ENCODE measurements at regions of chr15 and their contacts with region 1.

Region 1: GRCh38 chr15:64010719-64011118 is 35.6 kb downstream of the DAPK2 start:
- DNase-seq: peak; percentile 96
- ATAC-seq: peak; percentile 98
- H3K4me3 ChIP-seq: no peak overlapping the region
- H3K27ac ChIP-seq: peak overlapping the region; percentile 76
- H3K4me1 ChIP-seq: peaks cover 32% of the 10 kb centered on the region
- H3K27me3 ChIP-seq: no peaks in the 10 kb centered on the region
- CTCF ChIP-seq: peak; percentile 36 to 71 (median 54)
- EP300 ChIP-seq: peak; percentile 61 to 78; a peak in 2 of 4 replicates
- POLR2A ChIP-seq: no peak
- RAD21 ChIP-seq: peak; percentile 77

Region 2: DNA sequence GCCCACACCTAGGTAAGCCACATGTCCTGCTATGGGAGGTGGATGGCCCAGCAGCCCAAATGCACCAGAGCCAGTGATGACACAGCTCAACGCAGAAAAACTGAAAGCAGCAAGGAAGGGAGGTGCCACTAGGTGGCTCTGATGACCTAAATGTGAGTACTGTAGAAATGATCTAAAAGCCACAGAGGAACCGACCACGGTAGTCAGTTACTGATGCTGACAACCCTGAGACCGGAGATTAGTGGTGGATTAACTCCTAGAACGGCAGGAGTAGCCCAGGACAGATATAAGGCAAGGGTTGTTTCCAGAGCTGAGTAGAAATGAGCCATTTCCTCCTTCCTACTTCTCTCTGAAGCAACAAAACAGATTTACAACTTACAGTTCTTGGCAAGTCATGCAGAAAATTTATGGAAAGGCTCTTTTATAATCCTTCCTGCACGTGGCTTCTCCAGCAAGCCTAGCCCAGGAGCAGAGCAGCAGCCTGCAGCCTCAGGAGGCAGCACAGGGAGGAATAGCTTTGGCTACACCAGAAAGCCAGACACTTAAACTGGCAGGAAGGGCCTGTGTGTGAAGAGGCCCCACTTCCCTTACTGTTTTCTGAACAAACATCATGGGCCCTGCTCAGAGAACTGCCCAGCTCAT is 400.4 kb before region 1 on chr15:
- CTCF ChIA-PET with region 1: interaction called, 7 read pairs
- POLR2A ChIA-PET with region 1: no interaction called
- RAD21 ChIA-PET with region 1: interaction called, 3 read pairs
- SMC1A ChIA-PET with region 1: interaction called, 18 read pairs
- in situ Hi-C with region 1: no loop called
- intact Hi-C with region 1: no loop called
- DNase-seq: peak; percentile 61
- ATAC-seq: peak; percentile 97
- H3K4me3 ChIP-seq: no peak overlapping the region
- H3K27ac ChIP-seq: peak overlapping the region; percentile 78
- H3K4me1 ChIP-seq: peaks cover 16% of the 10 kb centered on the region
- H3K27me3 ChIP-seq: no peaks in the 10 kb centered on the region
- CTCF ChIP-seq: peak; percentile 80 to 93 (median 89)
- EP300 ChIP-seq: no peak
- POLR2A ChIP-seq: no peak
- RAD21 ChIP-seq: peak; percentile 92

Region 3: DNA sequence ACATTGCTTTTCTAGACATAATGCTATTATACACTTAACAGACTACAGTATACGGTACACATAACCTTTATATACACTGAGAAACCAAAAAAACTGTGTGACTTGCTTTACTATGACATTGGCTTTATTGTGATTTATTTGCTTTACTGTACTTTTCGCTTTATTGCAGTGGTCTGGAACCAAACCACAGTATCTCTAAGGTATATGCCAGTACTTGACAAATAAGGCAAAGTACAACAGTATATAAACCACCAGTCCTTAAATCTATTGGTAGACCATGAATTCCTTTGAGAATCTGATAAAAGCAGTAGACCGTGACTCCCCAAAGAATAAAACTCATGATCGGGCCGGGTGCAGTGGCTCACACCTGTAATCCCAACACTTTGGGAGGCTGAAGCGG is 227.3 kb before region 1 on chr15:
- CTCF ChIA-PET with region 1: no interaction called
- POLR2A ChIA-PET with region 1: no interaction called
- RAD21 ChIA-PET with region 1: no interaction called
- SMC1A ChIA-PET with region 1: no interaction called
- in situ Hi-C with region 1: no loop called
- intact Hi-C with region 1: no loop called
- DNase-seq: no peak
- ATAC-seq: no peak
- H3K4me3 ChIP-seq: no peak overlapping the region
- H3K27ac ChIP-seq: no peak overlapping the region
- H3K4me1 ChIP-seq: no peaks in the 10 kb centered on the region
- H3K27me3 ChIP-seq: no peaks in the 10 kb centered on the region
- CTCF ChIP-seq: no peak
- EP300 ChIP-seq: no peak
- POLR2A ChIP-seq: no peak
- RAD21 ChIP-seq: no peak

Region 4: GRCh38 chr15:63881431-63881830 is 129.3 kb before region 1 on chr15:
- CTCF ChIA-PET with region 1: interaction called, 7 read pairs
- POLR2A ChIA-PET with region 1: no interaction called
- RAD21 ChIA-PET with region 1: interaction called, 13 read pairs
- SMC1A ChIA-PET with region 1: interaction called, 8 read pairs
- in situ Hi-C with region 1: no loop called
- intact Hi-C with region 1: no loop called
- DNase-seq: peak; percentile 81
- ATAC-seq: peak; percentile 69
- H3K4me3 ChIP-seq: no peak overlapping the region
- H3K27ac ChIP-seq: peak overlapping the region; percentile 66
- H3K4me1 ChIP-seq: peaks cover 53% of the 10 kb centered on the region
- H3K27me3 ChIP-seq: no peaks in the 10 kb centered on the region
- CTCF ChIP-seq: 0 out of 6 replicates have a peak, but pooled peaks of 1 of the 3 experiments have one; percentile 7
- EP300 ChIP-seq: peak; percentile 16 to 51; a peak in 1 of 4 replicates
- POLR2A ChIP-seq: no peak
- RAD21 ChIP-seq: no peak

Region 5: GRCh38 chr15:63945007-63945788 is 65.5 kb before region 1 on chr15:
- CTCF ChIA-PET with region 1: interaction called, 47 read pairs
- POLR2A ChIA-PET with region 1: no interaction called
- RAD21 ChIA-PET with region 1: interaction called, 21 read pairs
- SMC1A ChIA-PET with region 1: interaction called, 39 read pairs
- in situ Hi-C with region 1: no loop called
- intact Hi-C with region 1: no loop called
- DNase-seq: no peak
- ATAC-seq: peak; percentile 89
- H3K4me3 ChIP-seq: no peak overlapping the region
- H3K27ac ChIP-seq: no peak overlapping the region
- H3K4me1 ChIP-seq: peaks cover 13% of the 10 kb centered on the region
- H3K27me3 ChIP-seq: no peaks in the 10 kb centered on the region
- CTCF ChIP-seq: peak; percentile 83 to 99 (median 98)
- EP300 ChIP-seq: no peak
- POLR2A ChIP-seq: no peak
- RAD21 ChIP-seq: peak; percentile 78

Region 6: GRCh38 chr15:63998489-63998888 is 12.2 kb before region 1 on chr15:
- CTCF ChIA-PET with region 1: interaction called, 5 read pairs
- POLR2A ChIA-PET with region 1: interaction called, 5 read pairs
- RAD21 ChIA-PET with region 1: interaction called, 6 read pairs
- SMC1A ChIA-PET with region 1: interaction called, 17 read pairs
- in situ Hi-C with region 1: no loop called
- intact Hi-C with region 1: no loop called
- DNase-seq: no peak
- ATAC-seq: peak; percentile 88
- H3K4me3 ChIP-seq: no peak overlapping the region
- H3K27ac ChIP-seq: peak overlapping the region; percentile 40; the same call in 1 of the 2 replicates
- H3K4me1 ChIP-seq: peaks cover 30% of the 10 kb centered on the region
- H3K27me3 ChIP-seq: no peaks in the 10 kb centered on the region
- CTCF ChIP-seq: no peak
- EP300 ChIP-seq: no peak
- POLR2A ChIP-seq: no peak
- RAD21 ChIP-seq: no peak

Region 7: DNA sequence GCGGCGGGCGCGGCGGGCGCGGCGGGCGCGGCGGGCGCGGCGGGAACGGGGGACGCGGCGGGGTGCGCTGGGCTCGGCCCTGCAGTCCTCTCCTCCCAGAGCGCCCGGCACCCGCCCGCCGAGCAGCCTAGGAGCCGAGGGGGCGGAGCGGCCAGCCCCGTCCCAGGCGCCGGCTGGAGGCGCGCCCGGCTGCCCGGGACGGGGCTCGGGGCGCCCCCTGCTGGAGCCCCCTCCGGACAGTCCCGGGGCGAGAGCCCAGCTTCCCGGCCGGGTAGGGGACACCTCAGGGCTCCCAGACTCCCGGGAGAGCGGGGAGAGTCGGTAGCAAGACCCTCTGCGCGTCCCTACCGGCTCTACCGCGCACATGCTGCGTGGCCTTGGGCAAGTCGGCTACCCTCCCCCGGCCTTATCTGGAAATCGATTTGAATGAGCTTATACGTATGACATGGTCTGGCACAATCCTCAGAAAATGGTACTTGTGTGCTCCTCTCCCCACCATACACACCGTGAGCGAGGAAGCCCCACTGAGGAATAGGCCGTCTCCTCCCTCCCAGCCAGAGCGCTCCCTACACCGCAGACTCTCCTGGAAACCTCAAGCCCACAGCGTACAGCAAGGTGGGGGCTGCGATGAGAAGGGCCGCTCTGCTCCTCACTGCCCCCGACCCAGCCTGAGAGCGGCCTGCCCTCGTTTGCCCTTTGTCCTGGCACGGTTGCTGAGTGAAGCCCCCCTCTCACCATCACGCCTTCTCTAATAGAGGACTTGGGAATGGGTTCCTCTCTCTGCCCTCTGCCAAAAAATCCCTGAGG is 35.8 kb after region 1 on chr15 and contains the start of gene DAPK2:
- CTCF ChIA-PET with region 1: interaction called, 40 read pairs
- POLR2A ChIA-PET with region 1: interaction called, 6 read pairs
- RAD21 ChIA-PET with region 1: interaction called, 50 read pairs
- SMC1A ChIA-PET with region 1: interaction called, 33 read pairs
- in situ Hi-C with region 1: no loop called
- intact Hi-C with region 1: loop called (anchors 2 kb)
- DNase-seq: no peak
- ATAC-seq: peak; percentile 79
- H3K4me3 ChIP-seq: peak within 1 kb of the TSS; percentile 69
- H3K27ac ChIP-seq: peak within 1 kb of the TSS; percentile 55
- H3K4me1 ChIP-seq: peaks cover 36% of the 10 kb centered on the region
- H3K27me3 ChIP-seq: no peaks in the 10 kb centered on the region
- CTCF ChIP-seq: peak; percentile 71 to 81 (median 74)
- EP300 ChIP-seq: no peak
- POLR2A ChIP-seq: no peak; the same call in 1 of the 2 replicates
- RAD21 ChIP-seq: peak; percentile 67
- polyA plus RNA-seq, gene DAPK2: 0.69 to 0.75 TPM